Breast epithelium (tissue), 4 donors: ENCODE measurements at regions of chr3 and their contacts with region 1.

Region 1: GRCh38 chr3:120274739-120275167 is 10.3 kb downstream of the GPR156 start:
- DNase-seq: no peak
- H3K4me3 ChIP-seq: no peak overlapping the region
- H3K27ac ChIP-seq: no peak overlapping the region
- H3K4me1 ChIP-seq: no peaks in the 10 kb centered on the region
- H3K27me3 ChIP-seq: no peaks in the 10 kb centered on the region
- CTCF ChIP-seq: no peak
- POLR2A ChIP-seq: no peak

Region 2: DNA sequence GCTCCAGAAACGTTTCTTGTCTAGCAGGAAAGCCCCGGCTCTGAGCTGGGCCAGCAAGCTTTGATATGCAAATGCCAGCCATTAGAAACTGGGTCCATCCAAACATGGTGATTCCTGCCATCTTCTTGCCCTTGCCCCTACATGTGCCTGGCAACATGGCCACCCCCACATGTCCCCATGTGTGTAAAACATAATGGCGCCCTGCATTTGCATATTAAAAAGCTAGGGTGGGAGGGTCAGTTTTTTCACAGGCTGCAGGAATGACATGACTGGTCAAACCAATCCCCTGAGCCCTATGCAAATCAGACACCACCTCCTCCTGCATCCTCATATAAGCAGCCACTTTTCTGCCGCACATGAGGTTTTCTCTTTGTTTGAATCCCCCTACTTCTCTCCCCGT is 11.0 kb before region 1 on chr3:
- intact Hi-C with region 1: loop called (anchors 1 kb)
- DNase-seq: no peak
- H3K4me3 ChIP-seq: no peak overlapping the region
- H3K27ac ChIP-seq: no peak overlapping the region
- H3K4me1 ChIP-seq: no peaks in the 10 kb centered on the region
- H3K27me3 ChIP-seq: no peaks in the 10 kb centered on the region
- CTCF ChIP-seq: no peak
- POLR2A ChIP-seq: no peak

Region 3: DNA sequence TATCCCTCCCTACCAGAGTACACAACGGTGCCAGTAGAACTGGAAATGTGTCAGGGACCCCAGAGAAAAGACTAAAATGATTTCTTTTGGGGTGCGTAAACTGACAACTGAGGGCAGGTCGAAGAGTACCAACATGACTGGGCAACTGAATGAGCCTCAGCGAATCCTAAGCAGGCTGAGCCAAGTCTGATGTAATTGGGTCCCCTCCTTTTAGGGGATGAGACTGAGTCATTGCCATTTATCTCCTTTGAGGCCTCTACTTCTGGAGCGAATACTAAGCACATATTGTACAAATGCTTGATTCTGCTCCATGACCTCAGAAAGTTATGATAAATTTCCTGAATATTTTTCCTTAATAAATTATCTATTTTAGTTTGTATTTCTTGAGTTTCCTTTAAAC is 27.6 kb after region 1 on chr3:
- intact Hi-C with region 1: no loop called
- DNase-seq: no peak
- H3K4me3 ChIP-seq: no peak overlapping the region
- H3K27ac ChIP-seq: no peak overlapping the region
- H3K4me1 ChIP-seq: no peaks in the 10 kb centered on the region
- H3K27me3 ChIP-seq: no peaks in the 10 kb centered on the region
- CTCF ChIP-seq: no peak
- POLR2A ChIP-seq: no peak

Region 4: GRCh38 chr3:120642368-120642948 is 367.7 kb after region 1 on chr3:
- intact Hi-C with region 1: no loop called
- DNase-seq: no peak
- H3K4me3 ChIP-seq: no peak overlapping the region
- H3K27ac ChIP-seq: no peak overlapping the region
- H3K4me1 ChIP-seq: no peaks in the 10 kb centered on the region
- H3K27me3 ChIP-seq: no peaks in the 10 kb centered on the region
- CTCF ChIP-seq: no peak
- POLR2A ChIP-seq: no peak